ENCODE measurements at regions of chr6 and their contacts with region 1.

Region 1: DNA sequence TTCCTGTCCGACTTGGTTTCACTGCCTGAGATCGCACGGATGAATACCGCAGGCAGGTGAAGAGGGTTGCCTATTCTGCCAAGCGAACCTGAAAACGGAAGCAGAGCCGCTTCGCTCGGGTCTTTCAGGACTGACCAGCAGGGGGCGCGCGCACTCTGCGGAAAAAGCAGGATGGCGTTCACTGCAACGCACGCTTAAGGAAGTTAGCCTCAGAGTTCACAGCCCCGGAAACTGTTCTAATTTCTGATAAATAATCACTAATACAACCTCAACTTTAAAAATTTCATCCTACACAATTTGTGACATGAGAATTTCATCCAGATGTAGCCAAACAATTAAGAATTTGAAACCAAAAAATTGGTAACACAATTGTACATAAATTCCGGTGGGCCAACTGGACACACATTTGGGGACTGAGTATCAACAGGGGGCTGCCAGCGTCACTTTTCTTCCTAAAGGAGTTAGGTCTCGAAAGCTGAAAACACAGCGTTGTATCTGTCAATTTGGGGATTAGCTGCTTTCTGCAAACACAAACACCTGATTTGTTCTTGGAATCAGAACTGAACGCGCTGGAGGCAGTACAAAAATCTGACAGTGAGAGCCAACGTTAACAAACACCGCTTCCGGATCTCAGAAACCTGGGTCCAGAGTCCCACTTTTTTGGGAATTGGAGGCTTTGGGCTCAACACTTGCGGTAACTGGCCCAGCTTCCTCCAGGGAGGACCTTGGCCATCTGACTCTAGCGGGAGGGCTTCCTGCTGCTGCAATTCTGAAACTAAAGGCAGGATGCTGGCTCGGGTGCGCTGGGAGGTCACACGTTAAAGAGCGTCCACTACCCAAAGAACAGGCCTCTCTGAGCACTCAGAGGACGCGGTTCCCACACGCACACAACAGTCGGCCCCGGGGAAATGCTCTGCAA is 8.8 kb downstream of the PXDC1 start:
- DNase-seq: peak; percentile 92
- ATAC-seq: peak; percentile 28
- H3K4me3 ChIP-seq: peak overlapping the region in 4 of 5 experiments; percentile 26 to 44 (median 29)
- H3K4me3 Mint-ChIP-seq: peak overlapping the region; percentile 55
- H3K27ac ChIP-seq: peak overlapping the region; percentile 38 to 64
- H3K27ac Mint-ChIP-seq: peak overlapping the region; percentile 67
- H3K4me1 ChIP-seq: peaks cover 33 to 38% of the 10 kb centered on the region in 2 donors
- H3K4me1 Mint-ChIP-seq: peaks cover 47% of the 10 kb centered on the region
- H3K27me3 ChIP-seq: peaks cover 0 to 4% (median 0%) of the 10 kb centered on the region in 4 experiments
- H3K27me3 Mint-ChIP-seq: no peaks in the 10 kb centered on the region
- CTCF ChIP-seq: peak; percentile 91

Region 2: DNA sequence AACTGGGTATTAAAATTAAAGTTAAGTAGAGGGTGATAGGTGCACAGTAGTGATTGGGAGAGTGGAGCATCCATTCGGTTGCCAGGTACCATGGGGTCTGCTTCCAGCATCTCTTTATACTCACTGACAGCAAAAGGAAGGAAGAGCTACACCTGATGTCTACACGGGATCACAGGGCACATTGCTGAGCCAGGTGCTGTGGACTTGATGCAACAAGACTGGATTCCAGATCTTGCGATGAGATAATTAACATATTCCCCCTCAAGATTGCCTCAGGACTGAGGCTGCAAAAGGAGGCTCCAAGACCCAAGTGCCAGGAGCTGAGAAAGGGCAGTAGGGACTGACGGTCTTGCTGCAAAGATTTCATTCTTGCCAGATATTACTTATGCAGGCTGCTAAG is 63.7 kb before region 1 on chr6:
- CTCF ChIA-PET with region 1: no interaction called
- POLR2A ChIA-PET with region 1: no interaction called
- intact Hi-C with region 1: no loop called
- DNase-seq: no peak
- ATAC-seq: no peak
- H3K4me3 ChIP-seq: no peak overlapping the region
- H3K4me3 Mint-ChIP-seq: no peak overlapping the region
- H3K27ac ChIP-seq: no peak overlapping the region
- H3K27ac Mint-ChIP-seq: no peak overlapping the region
- H3K4me1 ChIP-seq: no peaks in the 10 kb centered on the region
- H3K4me1 Mint-ChIP-seq: no peaks in the 10 kb centered on the region
- H3K27me3 ChIP-seq: peaks cover 0 to 3% (median 0%) of the 10 kb centered on the region in 4 experiments
- H3K27me3 Mint-ChIP-seq: peaks cover 42% of the 10 kb centered on the region
- CTCF ChIP-seq: no peak

Region 3: DNA sequence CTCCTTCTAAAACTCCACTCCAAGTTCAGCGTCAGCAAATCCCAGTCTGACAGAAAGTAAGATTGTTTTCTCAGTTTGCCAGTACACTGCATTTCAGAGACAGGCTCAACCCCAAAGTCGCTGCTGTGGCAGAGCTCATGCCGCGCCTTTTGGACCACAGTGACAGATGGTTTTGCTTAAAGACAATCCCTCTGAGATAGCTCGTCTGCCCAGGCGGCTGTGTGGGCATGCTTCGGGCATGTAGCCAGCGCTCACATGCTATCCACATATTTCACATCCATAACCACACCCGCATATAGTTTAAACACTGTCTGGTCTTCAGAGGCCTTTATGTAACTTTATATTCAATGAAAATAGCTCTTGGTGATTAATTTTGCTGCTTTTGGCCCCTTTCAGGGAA is 23.5 kb after region 1 on chr6:
- CTCF ChIA-PET with region 1: interaction called, 5 read pairs
- POLR2A ChIA-PET with region 1: no interaction called
- intact Hi-C with region 1: loop called (anchors 2 kb)
- DNase-seq: no peak
- ATAC-seq: no peak
- H3K4me3 ChIP-seq: no peak overlapping the region
- H3K4me3 Mint-ChIP-seq: no peak overlapping the region
- H3K27ac ChIP-seq: no peak overlapping the region
- H3K27ac Mint-ChIP-seq: no peak overlapping the region
- H3K4me1 ChIP-seq: peaks cover 28 to 51% of the 10 kb centered on the region in 2 donors
- H3K4me1 Mint-ChIP-seq: peaks cover 54% of the 10 kb centered on the region
- H3K27me3 ChIP-seq: no peaks in the 10 kb centered on the region
- H3K27me3 Mint-ChIP-seq: no peaks in the 10 kb centered on the region
- CTCF ChIP-seq: no peak

Region 4: DNA sequence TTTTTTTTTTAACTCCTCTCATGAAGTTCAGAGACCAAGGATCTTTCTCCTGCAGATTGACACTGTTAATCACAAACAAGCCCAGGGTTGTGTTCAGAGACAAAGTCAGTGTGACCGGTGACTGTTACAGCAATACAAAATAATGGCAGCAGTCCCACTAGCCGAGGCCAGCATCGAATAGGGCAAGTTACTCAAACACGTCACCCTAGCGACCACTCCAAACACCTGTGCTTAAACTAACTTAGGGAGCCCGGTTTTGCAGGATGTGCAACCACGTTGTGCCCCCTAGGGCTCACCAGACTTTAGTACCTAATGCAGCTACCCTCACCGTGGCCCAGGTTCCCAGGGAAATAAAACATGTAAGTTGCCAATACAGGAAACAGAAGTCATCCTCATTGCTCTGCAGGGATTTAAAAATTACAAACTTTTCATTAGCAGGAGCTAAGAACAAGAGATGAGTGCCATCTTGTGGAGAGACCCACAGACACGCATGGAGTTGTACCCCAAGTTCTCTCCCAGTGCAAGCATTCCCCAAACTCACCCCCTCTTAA is 144.5 kb after region 1 on chr6:
- CTCF ChIA-PET with region 1: interaction called, 85 read pairs
- POLR2A ChIA-PET with region 1: no interaction called
- intact Hi-C with region 1: loop called (anchors 1 kb)
- DNase-seq: peak; percentile 28
- ATAC-seq: no peak
- H3K4me3 ChIP-seq: no peak overlapping the region
- H3K4me3 Mint-ChIP-seq: no peak overlapping the region
- H3K27ac ChIP-seq: no peak overlapping the region
- H3K27ac Mint-ChIP-seq: no peak overlapping the region
- H3K4me1 ChIP-seq: no peaks in the 10 kb centered on the region
- H3K4me1 Mint-ChIP-seq: no peaks in the 10 kb centered on the region
- H3K27me3 ChIP-seq: no peaks in the 10 kb centered on the region
- H3K27me3 Mint-ChIP-seq: peaks cover 3% of the 10 kb centered on the region
- CTCF ChIP-seq: peak; percentile 21

Region 5: DNA sequence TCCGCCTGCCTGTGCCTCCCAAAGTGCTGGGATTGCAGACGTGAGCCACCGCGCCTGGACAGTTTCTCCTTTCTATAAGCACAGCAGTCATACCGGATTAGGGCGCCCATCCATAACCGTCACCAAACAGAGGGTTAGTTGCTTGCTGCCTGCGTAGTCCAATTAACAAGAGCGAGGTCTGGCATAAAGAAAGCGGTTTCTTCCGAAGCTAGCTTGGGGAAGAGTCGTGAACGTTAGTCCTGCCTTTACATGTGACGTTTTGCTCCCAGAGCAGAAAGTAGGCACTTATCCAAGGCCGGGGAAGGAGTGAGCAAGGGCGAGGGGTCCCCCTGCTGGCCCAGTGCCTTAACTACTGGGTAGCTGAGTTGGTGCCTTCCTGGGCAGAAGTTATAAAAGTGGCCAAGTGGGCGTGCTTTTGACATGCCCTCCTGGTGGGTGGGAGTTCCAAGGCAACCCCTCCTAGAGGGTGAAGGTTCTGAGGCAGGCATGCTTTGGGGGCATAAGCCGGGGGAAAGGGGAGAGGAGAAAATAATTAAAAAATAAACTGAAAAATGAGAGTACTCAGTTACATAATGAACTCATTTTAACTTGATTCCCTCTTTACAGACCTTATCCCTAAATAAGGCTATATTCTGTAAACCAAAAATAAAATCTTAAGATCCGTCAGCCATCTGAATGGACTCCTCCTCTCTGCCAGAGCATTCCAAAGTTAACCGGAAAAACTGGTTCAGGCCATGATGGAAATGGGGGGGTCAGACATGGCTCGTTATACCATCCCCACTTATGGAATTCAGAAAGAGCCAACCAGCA is 248.2 kb after region 1 on chr6:
- CTCF ChIA-PET with region 1: interaction called, 16 read pairs
- POLR2A ChIA-PET with region 1: interaction called, 8 read pairs
- intact Hi-C with region 1: loop called (anchors 1 kb)
- DNase-seq: peak; percentile 72
- ATAC-seq: peak; percentile 85
- H3K4me3 ChIP-seq: no peak overlapping the region
- H3K4me3 Mint-ChIP-seq: no peak overlapping the region
- H3K27ac ChIP-seq: no peak overlapping the region
- H3K27ac Mint-ChIP-seq: no peak overlapping the region
- H3K4me1 ChIP-seq: peaks cover 0 to 5% of the 10 kb centered on the region in 2 donors
- H3K4me1 Mint-ChIP-seq: peaks cover 5% of the 10 kb centered on the region
- H3K27me3 ChIP-seq: no peaks in the 10 kb centered on the region
- H3K27me3 Mint-ChIP-seq: no peaks in the 10 kb centered on the region
- CTCF ChIP-seq: peak; percentile 81

Region 6: DNA sequence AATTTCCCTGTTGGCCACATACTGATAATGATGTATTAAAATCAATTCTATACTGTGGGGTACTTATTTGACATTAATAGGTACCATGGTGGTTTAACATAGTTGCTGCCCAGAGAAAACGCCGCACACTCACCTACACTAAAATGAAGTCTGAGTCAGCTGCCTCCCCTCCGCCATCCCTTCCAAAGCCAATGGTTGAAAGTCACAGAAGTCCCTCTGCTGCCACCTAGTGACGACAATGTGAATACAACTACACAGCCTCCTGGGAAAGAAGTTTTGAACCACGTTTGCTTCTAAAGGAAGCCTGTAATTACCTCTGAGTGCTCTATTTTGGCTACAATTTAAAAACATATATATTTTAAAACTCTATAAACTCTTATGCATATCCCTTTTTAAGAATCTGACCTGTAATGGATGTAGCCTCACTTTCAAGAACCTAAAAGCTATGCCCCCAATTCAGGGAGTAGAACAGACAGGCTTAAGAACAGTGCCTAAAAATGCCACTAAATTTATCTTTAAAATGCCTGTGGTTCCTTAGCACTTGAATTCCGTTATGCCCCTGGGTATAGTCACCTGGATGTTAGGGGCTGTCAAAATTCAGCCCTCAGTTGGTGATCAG is 413.3 kb after region 1 on chr6:
- CTCF ChIA-PET with region 1: interaction called, 7 read pairs
- POLR2A ChIA-PET with region 1: no interaction called
- intact Hi-C with region 1: loop called (anchors 1 kb)
- DNase-seq: peak; percentile 85
- ATAC-seq: peak; percentile 78
- H3K4me3 ChIP-seq: no peak overlapping the region
- H3K4me3 Mint-ChIP-seq: no peak overlapping the region
- H3K27ac ChIP-seq: no peak overlapping the region
- H3K27ac Mint-ChIP-seq: no peak overlapping the region
- H3K4me1 ChIP-seq: peaks cover 4 to 12% of the 10 kb centered on the region in 2 donors
- H3K4me1 Mint-ChIP-seq: peaks cover 31% of the 10 kb centered on the region
- H3K27me3 ChIP-seq: peaks cover 0 to 6% (median 0%) of the 10 kb centered on the region in 4 experiments
- H3K27me3 Mint-ChIP-seq: peaks cover 10% of the 10 kb centered on the region
- CTCF ChIP-seq: peak; percentile 94

Measured in B cell (primary cell).